ENCODE measurements at regions of chr19 and their contacts with region 1.

Region 1: DNA sequence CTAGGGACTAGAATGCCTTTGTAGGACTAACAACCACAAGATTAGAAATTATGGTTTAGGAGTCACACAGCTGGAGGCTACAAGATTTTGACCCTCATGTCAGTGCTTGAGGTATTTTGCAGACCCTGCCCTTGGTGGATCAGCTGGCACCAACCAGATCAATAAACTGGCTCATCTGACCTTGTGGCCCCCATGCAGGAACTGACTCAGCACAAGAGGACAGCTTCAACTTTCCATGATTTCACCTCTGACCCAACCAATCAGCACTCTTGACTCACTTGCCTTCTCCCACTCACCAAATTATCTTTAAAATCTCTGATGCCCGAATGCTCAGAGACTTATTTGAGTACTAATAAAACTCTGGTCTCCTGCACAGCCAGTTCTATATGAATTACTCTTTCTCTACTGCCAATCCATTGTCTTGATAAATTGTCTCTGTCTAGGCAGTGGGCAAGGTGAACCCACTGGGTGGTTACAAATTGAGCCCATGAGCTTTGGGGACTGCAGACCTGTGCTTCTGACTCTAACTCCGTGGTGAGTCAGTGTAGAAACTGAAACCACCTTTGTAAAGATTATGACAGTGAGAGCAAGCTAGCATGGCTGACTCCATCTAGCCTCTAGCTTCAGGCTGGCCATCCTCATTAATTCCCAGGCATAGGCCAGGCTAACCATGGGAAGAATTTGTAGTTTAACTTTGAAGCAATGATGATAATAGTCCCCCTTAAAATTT is 33.9 kb upstream of the CEACAM8 start:
- DNase-seq: peak; percentile 17
- H3K4me3 Mint-ChIP-seq: peak overlapping the region; percentile 54
- H3K27ac Mint-ChIP-seq: peak overlapping the region; percentile 97
- H3K4me1 Mint-ChIP-seq: peaks cover 36% of the 10 kb centered on the region
- H3K27me3 Mint-ChIP-seq: peaks cover 2% of the 10 kb centered on the region

Region 2: GRCh38 chr19:42606660-42607351 is 21.8 kb before region 1 on chr19:
- intact Hi-C with region 1: loop called (anchors 1 kb)
- DNase-seq: peak; percentile 50
- H3K4me3 Mint-ChIP-seq: no peak overlapping the region
- H3K27ac Mint-ChIP-seq: no peak overlapping the region
- H3K4me1 Mint-ChIP-seq: peaks cover 7% of the 10 kb centered on the region
- H3K27me3 Mint-ChIP-seq: peaks cover 3% of the 10 kb centered on the region